ENCODE measurements at regions of chr11 and their contacts with region 1.

Region 1: GRCh38 chr11:84089072-84090057 is 803.2 kb upstream of the CCDC90B start:
- DNase-seq: no peak
- H3K4me3 ChIP-seq: no peak overlapping the region
- H3K27ac ChIP-seq: no peak overlapping the region
- H3K4me1 ChIP-seq: no peaks in the 10 kb centered on the region
- H3K27me3 ChIP-seq: no peaks in the 10 kb centered on the region
- CTCF ChIP-seq: no peak
- POLR2A ChIP-seq: no peak

Region 2: DNA sequence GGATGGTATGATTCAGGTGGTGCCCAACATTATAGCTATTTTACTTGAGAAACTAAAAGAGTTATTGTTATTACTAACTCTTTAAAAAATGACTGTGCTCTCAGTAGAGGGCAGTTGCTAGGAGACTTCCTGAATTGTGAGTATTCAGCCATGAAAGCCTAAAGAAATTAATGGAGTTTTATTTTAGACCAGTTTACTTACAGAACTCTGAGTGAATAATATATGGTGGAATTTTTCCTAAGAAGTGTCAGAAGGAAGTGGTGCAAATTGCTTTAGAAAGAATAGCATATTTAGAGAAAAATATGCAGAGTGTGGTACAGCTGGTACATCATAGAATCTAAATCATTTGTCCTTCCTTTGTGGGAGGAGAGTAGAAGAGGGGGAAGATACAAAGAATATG is 113.3 kb before region 1 on chr11:
- intact Hi-C with region 1: no loop called
- DNase-seq: no peak
- H3K4me3 ChIP-seq: no peak overlapping the region
- H3K27ac ChIP-seq: no peak overlapping the region
- H3K4me1 ChIP-seq: no peaks in the 10 kb centered on the region
- H3K27me3 ChIP-seq: no peaks in the 10 kb centered on the region
- CTCF ChIP-seq: no peak
- POLR2A ChIP-seq: no peak

Region 3: GRCh38 chr11:84044706-84045105 is 44.7 kb before region 1 on chr11:
- intact Hi-C with region 1: loop called (anchors 5 kb)
- DNase-seq: no peak
- H3K4me3 ChIP-seq: no peak overlapping the region
- H3K27ac ChIP-seq: no peak overlapping the region
- H3K4me1 ChIP-seq: no peaks in the 10 kb centered on the region
- H3K27me3 ChIP-seq: no peaks in the 10 kb centered on the region
- CTCF ChIP-seq: no peak
- POLR2A ChIP-seq: no peak

Measured in uterus (tissue), 4 donors.